MCF 10A (cell line): ENCODE measurements at regions of chr5 and their contacts with region 1.

Region 1: DNA sequence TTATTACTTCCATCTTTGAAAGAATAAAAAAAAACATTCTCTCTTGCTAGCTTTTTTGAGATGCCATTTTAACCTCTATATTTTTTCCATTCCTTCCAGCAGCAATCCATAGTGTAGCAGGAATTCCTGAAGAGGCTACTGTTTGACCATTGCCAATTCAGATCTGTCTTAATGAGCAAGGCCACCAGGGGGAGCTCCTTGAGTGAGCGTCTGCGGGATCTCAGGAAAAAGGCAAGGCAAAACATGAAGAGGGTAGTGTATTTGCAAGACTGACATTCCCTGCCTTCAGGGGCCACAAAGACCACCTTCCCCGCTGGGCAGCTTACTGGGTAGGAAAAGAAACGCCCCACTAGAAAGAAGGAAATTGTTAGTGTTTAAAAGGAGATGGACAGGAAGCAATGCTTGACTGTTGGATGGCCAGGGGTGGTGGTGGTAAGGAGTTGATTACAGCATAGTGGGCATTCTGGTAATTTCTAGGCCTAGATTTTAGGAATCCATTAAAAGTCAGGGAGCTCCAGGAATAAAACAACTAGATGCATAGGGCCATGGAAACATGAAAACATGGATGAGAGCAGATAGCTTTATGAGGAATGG is 206.6 kb upstream of the HAPLN1 start:
- DNase-seq: peak; percentile 65
- H3K4me3 Mint-ChIP-seq: no peak overlapping the region
- H3K27ac Mint-ChIP-seq: no peak overlapping the region
- H3K4me1 Mint-ChIP-seq: peaks cover 4% of the 10 kb centered on the region
- H3K27me3 Mint-ChIP-seq: peaks cover 62% of the 10 kb centered on the region
- CTCF ChIP-seq: peak; percentile 67

Region 2: DNA sequence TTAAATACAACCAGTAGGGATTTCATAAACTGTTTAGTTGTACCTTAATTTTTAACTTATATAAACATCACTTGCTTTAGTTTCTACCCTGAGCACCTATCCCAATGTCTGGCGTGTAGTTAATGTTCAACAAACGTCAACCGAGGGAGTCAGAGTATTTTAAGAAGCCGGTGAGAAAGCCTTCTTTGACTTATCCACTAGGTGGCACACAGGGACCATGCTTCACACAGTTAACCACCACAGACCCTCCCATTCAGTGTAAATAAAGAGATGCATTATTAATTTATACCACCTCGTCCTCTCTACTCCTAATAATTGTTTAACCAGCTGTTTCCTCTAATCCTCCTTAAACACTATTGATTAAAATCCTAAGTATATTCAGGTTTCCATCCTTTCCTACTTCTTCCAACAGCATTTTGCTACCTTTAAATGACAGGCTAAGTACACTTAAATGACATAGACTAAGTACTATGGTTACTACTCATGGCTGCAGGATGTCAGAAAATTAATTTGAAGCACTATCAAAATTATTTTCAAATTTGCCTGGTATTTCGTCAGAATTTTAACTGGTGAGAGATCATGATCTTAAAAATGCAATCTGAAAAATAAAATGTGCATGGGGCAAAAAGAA is 208.9 kb before region 1 on chr5:
- CTCF ChIA-PET with region 1: interaction called, 5 read pairs
- POLR2A ChIA-PET with region 1: no interaction called
- intact Hi-C with region 1: loop called (anchors 1 kb)
- DNase-seq: peak; percentile 67
- H3K4me3 Mint-ChIP-seq: no peak overlapping the region
- H3K27ac Mint-ChIP-seq: no peak overlapping the region
- H3K4me1 Mint-ChIP-seq: peaks cover 5% of the 10 kb centered on the region
- H3K27me3 Mint-ChIP-seq: peaks cover 99% of the 10 kb centered on the region
- CTCF ChIP-seq: peak; percentile 82

Region 3: DNA sequence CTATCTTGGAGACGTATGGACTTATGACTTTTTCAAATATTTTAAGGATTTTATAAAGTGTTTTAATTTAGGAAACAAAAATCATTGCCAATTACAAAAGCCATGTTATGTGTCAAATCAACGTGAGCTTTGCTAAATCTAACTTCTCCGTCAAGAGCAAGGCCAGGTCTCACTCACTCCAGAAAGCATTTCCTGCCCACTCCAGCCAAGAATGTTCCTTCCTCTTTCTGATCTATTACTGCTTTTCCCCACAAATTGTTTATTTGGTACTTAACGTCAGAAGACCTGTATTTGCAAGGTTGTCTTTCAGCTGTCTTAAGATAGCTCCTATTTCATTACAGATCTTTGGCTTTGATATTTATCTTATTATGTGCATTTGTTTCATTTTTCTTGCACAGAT is 13.0 kb before region 1 on chr5:
- CTCF ChIA-PET with region 1: interaction called, 20 read pairs
- POLR2A ChIA-PET with region 1: no interaction called
- intact Hi-C with region 1: no loop called
- DNase-seq: no peak
- H3K4me3 Mint-ChIP-seq: no peak overlapping the region
- H3K27ac Mint-ChIP-seq: no peak overlapping the region
- H3K4me1 Mint-ChIP-seq: no peaks in the 10 kb centered on the region
- H3K27me3 Mint-ChIP-seq: peaks cover 35% of the 10 kb centered on the region
- CTCF ChIP-seq: no peak

Region 4: GRCh38 chr5:83937837-83938236 is 10.6 kb after region 1 on chr5:
- CTCF ChIA-PET with region 1: interaction called, 15 read pairs
- POLR2A ChIA-PET with region 1: no interaction called
- intact Hi-C with region 1: no loop called
- DNase-seq: no peak
- H3K4me3 Mint-ChIP-seq: no peak overlapping the region
- H3K27ac Mint-ChIP-seq: no peak overlapping the region
- H3K4me1 Mint-ChIP-seq: no peaks in the 10 kb centered on the region
- H3K27me3 Mint-ChIP-seq: peaks cover 25% of the 10 kb centered on the region
- CTCF ChIP-seq: no peak

Region 5: DNA sequence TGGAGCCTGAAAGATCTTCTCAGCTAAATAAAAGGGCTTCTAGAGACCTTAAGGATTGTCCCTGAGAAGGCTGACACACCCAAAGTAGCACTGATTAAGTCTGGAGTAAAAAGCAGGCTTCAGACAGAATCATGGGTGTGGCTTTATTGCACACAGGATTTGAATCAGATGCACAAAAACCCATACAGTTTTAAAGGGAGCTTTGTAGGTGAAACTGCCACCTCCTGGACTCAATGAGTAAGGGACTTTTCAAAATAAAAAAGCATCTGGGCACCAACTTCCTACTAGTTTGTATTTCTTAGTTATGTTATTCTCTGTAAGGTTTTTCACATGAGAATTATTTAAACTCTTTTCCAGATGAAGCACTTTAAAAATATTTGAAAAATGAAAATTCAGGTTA is 328.1 kb after region 1 on chr5:
- CTCF ChIA-PET with region 1: interaction called, 4 read pairs
- POLR2A ChIA-PET with region 1: no interaction called
- intact Hi-C with region 1: loop called (anchors 1 kb)
- DNase-seq: peak; percentile 33
- H3K4me3 Mint-ChIP-seq: no peak overlapping the region
- H3K27ac Mint-ChIP-seq: no peak overlapping the region
- H3K4me1 Mint-ChIP-seq: no peaks in the 10 kb centered on the region
- H3K27me3 Mint-ChIP-seq: peaks cover 62% of the 10 kb centered on the region
- CTCF ChIP-seq: peak; percentile 20

Region 6: DNA sequence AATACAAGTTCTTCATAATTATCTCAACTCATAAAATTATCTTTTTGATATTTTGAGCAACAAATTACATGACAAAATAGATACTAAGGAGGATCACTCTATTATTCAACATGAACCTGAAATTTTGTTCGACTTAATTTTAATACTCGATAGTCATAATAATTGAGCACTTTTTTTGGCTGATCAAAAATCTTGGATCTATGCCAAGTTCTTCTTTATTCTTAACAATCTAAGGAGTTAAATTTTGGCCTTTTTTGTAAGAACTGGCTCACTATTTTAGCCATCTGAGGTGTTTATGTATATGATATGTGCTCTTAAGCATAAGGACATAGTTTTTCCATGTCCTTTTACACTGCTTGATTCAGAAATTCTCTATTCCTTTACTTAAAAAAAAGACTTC is 1694.4 kb after region 1 on chr5:
- CTCF ChIA-PET with region 1: no interaction called
- POLR2A ChIA-PET with region 1: no interaction called
- intact Hi-C with region 1: no loop called
- DNase-seq: no peak
- H3K4me3 Mint-ChIP-seq: no peak overlapping the region
- H3K27ac Mint-ChIP-seq: no peak overlapping the region
- H3K4me1 Mint-ChIP-seq: no peaks in the 10 kb centered on the region
- H3K27me3 Mint-ChIP-seq: no peaks in the 10 kb centered on the region
- CTCF ChIP-seq: no peak